ENCODE measurements at regions of chr2 and their contacts with region 1.

Region 1: DNA sequence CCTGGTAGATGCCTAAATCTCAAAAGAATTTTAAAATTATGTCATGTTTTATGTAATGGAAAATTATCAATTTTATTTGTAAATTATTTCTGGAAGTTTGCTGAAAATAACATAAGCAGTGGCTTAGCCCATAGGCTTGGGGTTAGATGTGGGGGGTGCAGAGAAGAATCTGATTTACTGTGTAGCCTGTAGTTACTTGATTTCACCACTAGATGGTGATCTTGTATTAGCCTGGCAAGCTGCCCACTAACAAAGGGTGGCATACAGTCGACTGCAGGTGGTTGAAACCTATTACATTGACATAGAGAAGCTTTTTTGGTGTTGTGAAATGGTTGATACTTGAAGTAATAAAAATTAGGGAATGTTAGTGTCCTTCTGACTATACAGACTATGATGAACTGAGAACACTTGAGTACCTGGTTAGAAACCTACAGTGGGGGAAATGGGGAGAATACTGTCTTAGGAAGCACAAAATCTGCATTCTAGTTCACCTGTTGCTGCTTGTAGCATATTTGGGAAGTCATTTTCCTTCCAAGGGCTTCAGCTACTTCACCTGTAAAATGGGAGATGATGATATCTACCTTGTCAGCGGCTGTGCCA is 191.0 kb upstream of the LHCGR start:
- DNase-seq: no peak

Region 2: DNA sequence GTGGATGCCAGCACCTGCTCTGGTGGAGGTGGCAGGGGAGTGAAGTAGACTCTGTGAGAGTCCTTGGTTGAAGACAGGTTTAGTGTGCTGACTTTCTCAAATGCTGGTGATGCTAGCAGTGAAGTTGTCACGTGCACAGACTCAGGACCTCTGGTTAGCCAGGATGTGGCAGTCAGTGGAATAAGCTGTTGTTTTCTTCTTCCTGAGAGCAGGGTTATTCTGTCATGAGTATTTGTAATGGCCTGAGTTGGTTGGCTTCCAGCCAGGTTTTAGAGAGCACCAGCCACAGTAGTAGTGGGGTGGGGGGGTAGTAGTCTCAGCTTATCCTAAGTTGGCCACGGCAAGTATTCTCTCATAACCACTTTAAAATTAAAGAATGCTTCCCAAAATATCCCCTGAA is 801.8 kb before region 1 on chr2:
- intact Hi-C with region 1: no loop called
- DNase-seq: no peak

Region 3: DNA sequence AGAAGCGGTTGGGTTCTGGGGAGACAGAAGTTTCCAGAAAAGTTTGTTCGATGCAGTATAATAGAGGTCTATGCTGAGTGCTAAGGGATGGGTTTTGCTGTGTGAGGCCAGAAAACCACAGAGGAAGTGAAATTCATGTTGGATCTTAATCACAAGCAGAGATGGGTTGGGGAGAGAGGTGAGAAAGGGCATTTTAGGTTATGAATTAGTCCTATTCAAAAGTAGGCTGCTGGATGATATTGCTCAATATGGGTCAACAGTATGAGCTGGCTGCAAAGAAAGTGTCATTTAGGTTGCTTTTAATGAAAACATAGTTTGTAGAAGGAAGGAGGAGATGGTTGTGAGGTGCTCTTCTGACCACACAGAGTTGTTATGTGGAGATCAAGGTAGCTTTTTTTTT is 72.3 kb before region 1 on chr2:
- intact Hi-C with region 1: no loop called
- DNase-seq: no peak

Region 4: GRCh38 chr2:50492477-50492851 is 1545.9 kb after region 1 on chr2:
- intact Hi-C with region 1: loop called in 1 of 2 experiments (anchors 10 kb)
- DNase-seq: no peak